HEK293 (cell line): ENCODE measurements at regions of chr6 and their contacts with region 1.

Region 1: DNA sequence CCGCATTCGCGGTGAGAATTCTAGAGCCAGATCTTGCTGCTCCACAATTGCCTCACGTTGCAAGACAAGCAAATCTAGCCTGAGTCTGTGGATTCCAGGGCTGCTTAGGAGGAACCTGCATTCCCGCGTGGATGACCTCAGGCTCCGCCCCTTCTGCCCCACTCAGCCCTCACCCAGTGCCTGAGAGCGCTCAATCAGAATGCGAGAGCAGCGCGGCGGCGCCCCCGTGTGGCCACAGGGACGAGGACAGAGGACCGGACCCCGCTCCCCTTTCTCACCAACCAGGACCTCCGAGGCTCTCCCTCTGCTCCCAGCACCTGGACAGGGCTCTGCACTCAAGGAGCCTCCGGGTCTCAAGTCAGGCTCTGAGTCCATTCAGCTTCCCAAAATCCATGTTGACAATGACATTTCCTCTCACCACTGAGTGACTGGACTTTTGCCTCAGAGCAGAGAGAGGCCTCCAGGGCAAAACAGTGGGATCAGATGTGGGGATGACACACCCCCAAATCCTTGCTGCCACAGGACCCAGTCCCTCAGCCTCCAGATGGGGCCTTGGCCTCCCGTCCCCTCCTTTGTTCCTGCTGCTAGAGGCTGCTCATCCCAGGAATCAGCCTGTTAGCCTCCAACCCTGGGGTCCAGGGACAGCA is 52.0 kb downstream of the RPP21 start:
- H3K4me3 ChIP-seq: no peak overlapping the region
- H3K27ac ChIP-seq: no peak overlapping the region
- H3K4me1 ChIP-seq: no peaks in the 10 kb centered on the region
- CTCF ChIP-seq: peak; percentile 89

Region 2: DNA sequence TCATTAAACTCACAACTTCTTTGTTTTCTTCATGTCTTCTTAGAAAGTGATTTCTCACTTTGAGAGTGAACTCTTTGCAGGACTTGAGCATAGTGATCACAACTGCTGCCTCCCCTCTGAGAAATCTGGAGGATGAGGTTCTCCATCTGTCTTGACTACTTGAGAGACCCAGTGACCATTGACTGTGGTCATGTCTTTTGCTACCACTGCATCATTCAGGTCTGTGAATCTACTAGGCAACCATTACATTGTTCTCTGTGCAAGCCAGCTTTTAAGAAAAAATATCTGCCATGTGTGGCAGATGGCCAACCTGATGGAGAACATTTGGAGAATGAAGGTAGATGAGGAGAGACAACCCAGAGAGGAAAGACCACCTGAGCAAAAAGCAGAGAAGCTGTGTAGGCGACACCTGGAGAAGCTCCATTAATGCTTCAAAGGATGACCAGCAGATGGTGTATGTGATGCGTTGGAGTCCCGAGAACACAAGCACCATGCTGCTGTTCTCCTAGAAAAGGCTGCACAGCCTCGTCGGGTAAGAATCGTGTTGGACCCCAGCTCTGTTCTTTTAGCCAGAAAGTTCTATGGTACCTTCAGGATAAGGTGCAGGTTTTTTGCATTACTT is 158.7 kb before region 1 on chr6:
- CTCF ChIA-PET with region 1: interaction called, 11 read pairs
- POLR2A ChIA-PET with region 1: no interaction called
- H3K4me3 ChIP-seq: no peak overlapping the region
- H3K27ac ChIP-seq: no peak overlapping the region
- H3K4me1 ChIP-seq: no peaks in the 10 kb centered on the region
- CTCF ChIP-seq: peak; percentile 56

Region 3: GRCh38 chr6:30364591-30364990 is 32.4 kb before region 1 on chr6:
- CTCF ChIA-PET with region 1: interaction called, 41 read pairs
- POLR2A ChIA-PET with region 1: no interaction called
- H3K4me3 ChIP-seq: no peak overlapping the region
- H3K27ac ChIP-seq: no peak overlapping the region
- H3K4me1 ChIP-seq: no peaks in the 10 kb centered on the region
- CTCF ChIP-seq: peak; percentile 17; the same call in 1 of the 2 replicates

Region 4: DNA sequence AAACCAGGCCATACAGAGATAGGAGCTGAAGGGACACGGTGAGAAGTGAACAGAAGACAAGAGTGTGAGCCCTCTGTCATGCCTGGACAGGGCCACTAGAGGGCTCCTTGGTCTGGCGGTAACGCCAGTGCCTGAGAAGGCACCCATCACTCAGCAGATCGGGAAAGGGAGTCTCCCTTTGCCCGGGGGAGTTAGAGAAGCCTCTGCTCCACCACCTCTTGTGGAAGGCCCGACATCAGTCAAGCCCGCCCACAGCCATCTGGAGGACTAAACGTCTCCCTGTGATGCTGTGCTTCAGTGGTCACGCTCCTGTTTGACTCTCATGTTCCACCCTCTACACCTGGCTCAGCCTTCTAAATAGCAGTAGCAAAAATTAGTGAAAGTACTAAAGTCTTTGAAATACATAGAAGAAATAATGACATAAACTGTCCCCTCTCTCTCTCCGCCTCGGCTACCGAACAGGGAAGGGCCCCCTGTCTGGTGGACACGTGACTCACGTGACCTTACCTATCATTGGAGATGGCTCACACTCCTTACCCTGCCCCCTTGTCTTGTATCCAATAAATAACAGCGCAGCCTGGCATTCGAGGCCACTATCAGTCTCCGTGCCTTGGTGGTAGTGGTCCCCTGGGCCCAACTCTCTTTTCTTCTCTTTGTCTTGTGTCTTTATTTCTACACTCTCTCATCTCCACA is 14.7 kb after region 1 on chr6:
- CTCF ChIA-PET with region 1: interaction called, 14 read pairs
- POLR2A ChIA-PET with region 1: no interaction called
- H3K4me3 ChIP-seq: no peak overlapping the region
- H3K27ac ChIP-seq: no peak overlapping the region
- H3K4me1 ChIP-seq: no peaks in the 10 kb centered on the region
- CTCF ChIP-seq: peak; percentile 41; the same call in 1 of the 2 replicates